ENCODE measurements at regions of chr11 and their contacts with region 1.

Region 1: GRCh38 chr11:2151500-2152257 is 9.3 kb downstream of the INS start:
- DNase-seq: peak; percentile 79 to 90
- ATAC-seq: peak; percentile 80
- H3K4me3 ChIP-seq: no peak overlapping the region
- H3K27ac ChIP-seq: no peak overlapping the region
- H3K4me1 ChIP-seq: no peaks in the 10 kb centered on the region
- H3K27me3 ChIP-seq: no peaks in the 10 kb centered on the region

Region 2: DNA sequence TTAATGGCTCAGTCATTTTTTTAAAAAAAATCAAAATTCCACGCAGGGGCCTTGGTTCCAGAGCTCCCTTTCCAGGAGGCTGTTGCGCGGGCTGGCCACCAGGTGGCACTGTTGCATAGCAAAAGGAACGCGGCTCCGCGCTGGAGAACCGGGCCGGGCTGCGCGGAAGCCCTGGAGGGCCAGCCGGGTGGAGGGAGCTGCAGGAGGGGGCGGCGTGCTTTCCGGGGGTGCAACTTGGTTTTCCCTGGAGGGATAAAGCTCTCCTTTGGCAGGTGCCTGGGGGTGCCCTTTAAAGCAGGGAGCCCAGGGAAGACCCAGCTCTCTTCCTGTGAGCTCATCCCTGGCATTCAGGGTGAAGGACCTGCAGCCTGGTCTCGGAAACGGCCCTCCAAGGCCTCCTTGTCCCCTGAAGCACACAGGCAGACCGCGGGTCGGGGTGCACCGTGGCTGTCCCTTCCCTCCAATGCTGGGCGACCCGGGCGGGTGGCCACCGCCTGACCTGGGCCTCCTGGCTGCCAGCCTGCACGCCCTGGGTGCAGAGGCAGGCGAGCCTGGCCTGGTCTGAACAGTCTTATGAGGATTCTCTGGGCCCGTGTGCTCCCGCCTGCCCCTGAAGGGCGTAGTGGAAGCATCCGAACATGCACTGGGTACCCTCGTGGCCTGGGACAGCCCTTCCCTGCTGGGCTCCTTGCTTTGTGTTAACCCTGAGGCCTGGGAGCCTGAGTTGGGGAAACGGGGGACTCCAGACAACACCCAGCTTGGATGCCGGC is 498.7 kb before region 1 on chr11:
- intact Hi-C with region 1: loop called (anchors 1 to 10 kb)
- DNase-seq: peak; percentile 78 to 94
- ATAC-seq: peak; percentile 92
- H3K4me3 ChIP-seq: no peak overlapping the region
- H3K27ac ChIP-seq: no peak overlapping the region
- H3K4me1 ChIP-seq: no peaks in the 10 kb centered on the region
- H3K27me3 ChIP-seq: no peaks in the 10 kb centered on the region

Region 3: DNA sequence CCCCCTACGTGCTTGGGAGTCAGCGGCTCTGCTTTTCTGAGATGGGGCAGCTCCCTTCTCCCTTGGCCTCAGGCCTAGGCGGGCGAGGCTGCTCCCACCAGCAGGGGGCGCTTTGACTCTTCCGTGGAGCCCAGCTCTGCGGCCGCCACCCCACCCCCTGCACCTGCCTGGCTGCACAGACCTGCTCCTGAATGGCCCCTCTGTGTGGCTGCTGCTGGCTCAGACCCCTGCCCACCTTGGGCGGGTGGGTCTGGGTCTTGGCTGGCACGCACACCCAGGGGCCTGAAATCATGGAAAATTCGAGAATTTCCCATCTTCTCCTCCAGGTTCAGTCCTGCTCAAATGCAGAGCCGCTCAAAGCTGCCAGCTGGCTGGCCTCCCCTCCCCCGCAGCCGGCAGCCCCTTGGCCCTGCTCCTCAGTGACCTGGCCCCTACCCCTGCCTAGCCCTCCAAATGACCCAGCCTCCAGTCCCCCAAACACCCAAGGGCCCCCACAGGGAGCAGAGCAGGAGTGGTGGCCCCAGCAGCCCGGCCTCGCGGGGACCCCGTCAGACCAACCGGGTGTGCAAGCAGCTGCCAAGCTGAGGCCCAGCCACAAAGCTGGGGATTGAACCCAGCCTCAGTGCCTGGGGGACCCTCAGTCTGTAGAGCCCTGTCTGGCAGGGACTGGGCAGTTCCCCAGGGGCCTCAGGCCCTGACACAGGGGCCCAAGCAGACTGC is 269.0 kb before region 1 on chr11:
- intact Hi-C with region 1: loop called in 1 of 2 experiments (anchors 2 kb)
- DNase-seq: peak; percentile 87 to 94
- ATAC-seq: peak; percentile 85
- H3K4me3 ChIP-seq: no peak overlapping the region
- H3K27ac ChIP-seq: no peak overlapping the region
- H3K4me1 ChIP-seq: no peaks in the 10 kb centered on the region
- H3K27me3 ChIP-seq: no peaks in the 10 kb centered on the region